ENCODE measurements at regions of chr5 and their contacts with region 1.

Region 1: DNA sequence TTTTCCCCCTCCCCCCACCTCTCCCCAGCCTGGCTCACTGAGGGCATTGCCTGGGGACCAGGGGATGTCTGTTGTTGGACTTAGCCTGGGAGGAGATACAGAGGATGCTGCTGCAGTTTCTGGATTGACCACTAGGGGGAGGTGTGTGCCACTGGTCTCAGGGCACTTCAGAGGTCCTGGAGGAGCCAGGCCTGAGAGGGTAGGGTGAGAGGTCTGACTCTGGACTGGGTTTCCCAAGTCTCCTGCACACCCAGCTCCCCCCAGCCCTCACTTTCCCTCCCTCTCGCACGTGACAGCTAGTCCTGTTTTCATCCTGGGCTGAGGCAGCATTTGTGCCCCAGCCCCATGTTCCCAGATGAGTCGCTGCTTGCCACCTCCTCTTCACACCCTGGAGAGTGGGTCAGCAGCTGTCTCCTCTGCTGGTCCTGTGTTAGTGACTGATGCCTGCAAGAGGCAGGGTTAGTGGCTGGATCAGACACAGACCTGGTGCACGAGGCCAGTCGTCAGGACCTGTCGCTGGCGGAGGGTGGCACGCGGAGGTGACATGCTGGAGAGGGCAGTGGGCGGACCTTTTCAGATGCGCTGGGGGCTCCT is 4.4 kb downstream of the IL3 start:
- DNase-seq: peak; percentile 56 to 75
- ATAC-seq: peak; percentile 72 to 87 (median 76)
- H3K4me3 ChIP-seq: no peak overlapping the region
- H3K27ac ChIP-seq: no peak overlapping the region
- H3K4me1 ChIP-seq: no peaks in the 10 kb centered on the region
- H3K27me3 ChIP-seq: no peaks in the 10 kb centered on the region
- CTCF ChIP-seq: peak; percentile 89

Region 2: GRCh38 chr5:131589510-131590348 is 475.1 kb before region 1 on chr5:
- intact Hi-C with region 1: loop called in 1 of 2 experiments (anchors 5 kb)
- DNase-seq: no peak
- ATAC-seq: peak; percentile 57 to 88 (median 71)
- H3K4me3 ChIP-seq: no peak overlapping the region
- H3K27ac ChIP-seq: no peak overlapping the region
- H3K4me1 ChIP-seq: peaks cover 9% of the 10 kb centered on the region
- H3K27me3 ChIP-seq: no peaks in the 10 kb centered on the region
- CTCF ChIP-seq: peak; percentile 80

Region 3: GRCh38 chr5:131810510-131811249 is 254.2 kb before region 1 on chr5:
- intact Hi-C with region 1: loop called in 1 of 2 experiments (anchors 5 kb)
- DNase-seq: no peak
- ATAC-seq: peak; percentile 79 to 94 (median 84)
- H3K4me3 ChIP-seq: peak overlapping the region; percentile 12
- H3K27ac ChIP-seq: peak overlapping the region; percentile 53
- H3K4me1 ChIP-seq: peaks cover 31% of the 10 kb centered on the region
- H3K27me3 ChIP-seq: no peaks in the 10 kb centered on the region
- CTCF ChIP-seq: peak; percentile 43

Region 4: GRCh38 chr5:132086277-132086794 is 21.5 kb after region 1 on chr5:
- intact Hi-C with region 1: no loop called
- DNase-seq: peak; percentile 68 to 71
- ATAC-seq: peak in 3 of 4 donors; percentile 73 to 83 (median 73)
- H3K4me3 ChIP-seq: no peak overlapping the region
- H3K27ac ChIP-seq: no peak overlapping the region
- H3K4me1 ChIP-seq: no peaks in the 10 kb centered on the region
- H3K27me3 ChIP-seq: no peaks in the 10 kb centered on the region
- CTCF ChIP-seq: no peak

Region 5: GRCh38 chr5:132180134-132180745 is 115.4 kb after region 1 on chr5:
- intact Hi-C with region 1: loop called in 1 of 2 experiments (anchors 10 kb)
- DNase-seq: no peak
- ATAC-seq: peak; percentile 46 to 83 (median 64)
- H3K4me3 ChIP-seq: no peak overlapping the region
- H3K27ac ChIP-seq: no peak overlapping the region
- H3K4me1 ChIP-seq: no peaks in the 10 kb centered on the region
- H3K27me3 ChIP-seq: no peaks in the 10 kb centered on the region
- CTCF ChIP-seq: peak; percentile 76